Posterior vena cava (tissue), 2 donors: ENCODE measurements at regions of chr13 and their contacts with region 1.

Region 1: GRCh38 chr13:110819203-110820014 is 95.5 kb downstream of the ANKRD10 start:
- DNase-seq: peak; percentile 92

Region 2: GRCh38 chr13:109787135-109787954 is 1032.1 kb before region 1 on chr13:
- intact Hi-C with region 1: no loop called
- DNase-seq: no peak

Region 3: GRCh38 chr13:110593430-110594130 is 225.8 kb before region 1 on chr13:
- intact Hi-C with region 1: loop called (anchors 5 to 10 kb)
- DNase-seq: no peak

Region 4: DNA sequence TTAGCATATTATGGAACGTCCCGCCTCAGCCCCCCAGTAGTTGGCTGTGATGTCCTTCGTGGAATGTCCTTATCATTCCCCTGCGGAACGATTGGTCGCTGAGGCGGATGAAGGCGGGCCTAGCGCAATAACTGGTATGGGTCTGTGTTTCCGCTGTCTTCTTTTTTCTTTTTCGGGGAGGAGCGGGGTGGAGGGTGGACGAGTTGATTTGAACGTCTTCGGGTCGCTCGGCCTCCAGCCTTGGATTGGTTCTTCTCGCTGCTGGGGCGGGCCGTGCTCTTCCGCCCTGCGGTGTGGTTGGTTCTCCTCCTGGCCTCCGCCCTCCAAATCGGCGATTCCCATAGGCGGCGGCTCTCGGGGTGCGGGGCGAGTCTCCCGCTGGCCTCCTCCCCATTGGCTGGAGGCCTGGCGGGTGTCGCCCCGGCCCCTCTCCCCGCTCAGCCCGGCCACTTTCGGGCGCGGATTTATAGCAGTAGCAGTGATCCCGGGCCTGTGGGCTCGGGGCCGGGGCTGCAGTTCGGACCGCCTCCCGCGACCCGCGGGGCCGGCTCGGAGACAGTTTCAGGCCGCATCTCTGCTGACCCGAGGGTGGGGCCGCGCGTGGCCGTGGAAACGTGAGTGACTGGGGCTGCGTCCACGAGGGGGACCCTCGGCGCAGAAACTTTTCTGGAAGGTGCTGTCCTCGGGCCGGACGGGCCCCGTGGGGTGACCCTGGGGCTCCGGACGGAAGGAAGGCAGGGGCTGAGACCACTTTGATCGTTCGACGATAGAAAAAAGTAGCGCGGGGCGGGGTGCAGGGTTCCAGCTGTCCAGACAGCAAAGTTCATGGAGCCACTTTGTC is 103.8 kb before region 1 on chr13:
- intact Hi-C with region 1: loop called (anchors 10 kb)
- DNase-seq: peak; percentile 99

Region 5: GRCh38 chr13:110726726-110727125 is 92.7 kb before region 1 on chr13:
- intact Hi-C with region 1: loop called in 1 of 2 experiments (anchors 10 kb)
- DNase-seq: no peak